ENCODE measurements at regions of chr14 and their contacts with region 1.

Region 1: GRCh38 chr14:52068615-52069303 is at the start of gene NID2:
- DNase-seq: peak; percentile 89 to 90
- H3K4me3 ChIP-seq: peak within 1 kb of the TSS; percentile 43 to 79 (median 49)
- H3K27ac ChIP-seq: peak within 1 kb of the TSS; percentile 67 to 95 (median 87)
- H3K4me1 ChIP-seq: peaks cover 43 to 56% of the 10 kb centered on the region in 2 donors
- H3K27me3 ChIP-seq: no peaks in the 10 kb centered on the region
- CTCF ChIP-seq: no peak
- POLR2A ChIP-seq: peak in 1 of 2 donors; percentile 92
- total RNA-seq, gene NID2: 115 to 207 (median 130) TPM

Region 2: GRCh38 chr14:52015411-52016030 is 53.2 kb before region 1 on chr14:
- intact Hi-C with region 1: loop called (anchors 10 kb)
- DNase-seq: peak in 1 of 2 donors; percentile 27
- H3K4me3 ChIP-seq: no peak overlapping the region
- H3K27ac ChIP-seq: no peak overlapping the region
- H3K4me1 ChIP-seq: peaks cover 0 to 12% of the 10 kb centered on the region in 2 donors
- H3K27me3 ChIP-seq: no peaks in the 10 kb centered on the region
- CTCF ChIP-seq: peak in 4 of 6 experiments; percentile 9 to 36 (median 17)
- POLR2A ChIP-seq: no peak